ENCODE measurements at regions of chr9 and their contacts with region 1.

Region 1: GRCh38 chr9:121445981-121446380 is 53.7 kb downstream of the GGTA1 start:
- DNase-seq: peak; percentile 33
- H3K4me3 Mint-ChIP-seq: no peak overlapping the region
- H3K27ac Mint-ChIP-seq: no peak overlapping the region
- H3K4me1 Mint-ChIP-seq: peaks cover 8% of the 10 kb centered on the region
- H3K27me3 Mint-ChIP-seq: peaks cover 23% of the 10 kb centered on the region

Region 2: GRCh38 chr9:121463026-121463807 is 17.2 kb after region 1 on chr9:
- CTCF ChIA-PET with region 1: interaction called, 3 read pairs
- intact Hi-C with region 1: loop called (anchors 2 kb)
- DNase-seq: peak; percentile 57
- H3K4me3 Mint-ChIP-seq: no peak overlapping the region
- H3K27ac Mint-ChIP-seq: no peak overlapping the region
- H3K4me1 Mint-ChIP-seq: peaks cover 3% of the 10 kb centered on the region
- H3K27me3 Mint-ChIP-seq: peaks cover 23% of the 10 kb centered on the region